Ovary (tissue), 10 donors: ENCODE measurements at regions of chr17 and their contacts with region 1.

Region 1: DNA sequence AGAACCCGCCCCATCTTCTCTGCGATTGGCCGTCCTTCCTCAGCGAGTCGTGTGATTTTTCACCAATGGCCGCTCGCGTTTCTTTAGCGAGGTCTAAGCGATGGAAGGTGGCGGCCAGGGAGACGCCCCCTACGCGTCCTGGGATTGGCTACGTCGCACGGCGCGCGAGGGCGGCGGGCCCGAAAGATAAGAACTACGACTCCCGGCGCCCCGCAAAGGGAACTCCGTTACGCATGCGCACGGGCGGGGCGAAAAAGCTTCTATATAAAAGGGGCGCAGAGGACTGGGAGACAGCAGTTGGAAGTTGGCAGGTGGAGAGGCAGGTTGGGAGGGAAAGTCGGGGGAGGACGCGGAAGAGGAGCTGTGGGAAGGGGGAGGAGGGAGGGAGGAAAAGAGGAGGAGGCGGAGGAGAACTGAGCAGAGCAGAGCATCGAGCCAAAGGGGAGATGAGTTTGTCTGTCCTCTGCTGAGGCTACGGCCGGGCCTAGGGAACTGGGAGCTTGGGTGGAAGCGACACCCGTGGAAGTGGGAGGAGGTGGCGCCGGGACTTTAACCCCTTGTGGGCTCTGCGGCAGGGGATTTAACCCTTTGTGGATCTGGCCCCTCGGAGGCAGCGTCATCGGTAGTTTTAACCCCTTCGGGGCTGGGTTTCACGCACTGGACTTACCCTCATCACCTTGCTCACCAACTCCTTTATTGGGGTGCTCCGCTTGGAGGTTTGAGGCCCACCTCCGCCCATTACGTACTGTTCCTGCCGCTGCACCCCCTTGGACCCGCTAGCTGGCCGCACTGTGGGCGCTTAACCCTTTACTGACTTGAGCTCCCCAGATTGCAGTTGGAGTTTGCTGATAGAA is at the start of gene HEXIM1:
- DNase-seq: peak; percentile 99 to 100 (median 99)
- H3K4me3 ChIP-seq: peak within 1 kb of the TSS; percentile 76
- H3K27ac ChIP-seq: peak within 1 kb of the TSS; percentile 95 to 97
- H3K4me1 ChIP-seq: peaks cover 13% of the 10 kb centered on the region
- H3K27me3 ChIP-seq: no peaks in the 10 kb centered on the region
- CTCF ChIP-seq: peak in 2 of 3 donors; percentile 18 to 30
- EP300 ChIP-seq: peak; percentile 8
- POLR2A ChIP-seq: peak; percentile 99
- total RNA-seq, gene HEXIM1: 17.0 to 37.8 (median 27.9) TPM

Region 2: GRCh38 chr17:45161019-45161825 is 12.8 kb after region 1 on chr17:
- intact Hi-C with region 1: loop called in 1 of 4 experiments (anchors 1 kb)
- DNase-seq: peak; percentile 96 to 99 (median 98)
- H3K4me3 ChIP-seq: peak overlapping the region; percentile 90
- H3K27ac ChIP-seq: peak overlapping the region; percentile 93 to 99
- H3K4me1 ChIP-seq: peaks cover 13% of the 10 kb centered on the region
- H3K27me3 ChIP-seq: no peaks in the 10 kb centered on the region
- CTCF ChIP-seq: no peak
- EP300 ChIP-seq: peak; percentile 74
- POLR2A ChIP-seq: peak; percentile 99